Activated CD4-positive, alpha-beta T cell treated with anti-CD3 and anti-CD28 coated beads, Interleukin-2, amount 10 ng/mL, durations not matched to agents 7 days and 5 days (primary cell): ENCODE measurements at regions of chr17 and their contacts with region 1.

Region 1: DNA sequence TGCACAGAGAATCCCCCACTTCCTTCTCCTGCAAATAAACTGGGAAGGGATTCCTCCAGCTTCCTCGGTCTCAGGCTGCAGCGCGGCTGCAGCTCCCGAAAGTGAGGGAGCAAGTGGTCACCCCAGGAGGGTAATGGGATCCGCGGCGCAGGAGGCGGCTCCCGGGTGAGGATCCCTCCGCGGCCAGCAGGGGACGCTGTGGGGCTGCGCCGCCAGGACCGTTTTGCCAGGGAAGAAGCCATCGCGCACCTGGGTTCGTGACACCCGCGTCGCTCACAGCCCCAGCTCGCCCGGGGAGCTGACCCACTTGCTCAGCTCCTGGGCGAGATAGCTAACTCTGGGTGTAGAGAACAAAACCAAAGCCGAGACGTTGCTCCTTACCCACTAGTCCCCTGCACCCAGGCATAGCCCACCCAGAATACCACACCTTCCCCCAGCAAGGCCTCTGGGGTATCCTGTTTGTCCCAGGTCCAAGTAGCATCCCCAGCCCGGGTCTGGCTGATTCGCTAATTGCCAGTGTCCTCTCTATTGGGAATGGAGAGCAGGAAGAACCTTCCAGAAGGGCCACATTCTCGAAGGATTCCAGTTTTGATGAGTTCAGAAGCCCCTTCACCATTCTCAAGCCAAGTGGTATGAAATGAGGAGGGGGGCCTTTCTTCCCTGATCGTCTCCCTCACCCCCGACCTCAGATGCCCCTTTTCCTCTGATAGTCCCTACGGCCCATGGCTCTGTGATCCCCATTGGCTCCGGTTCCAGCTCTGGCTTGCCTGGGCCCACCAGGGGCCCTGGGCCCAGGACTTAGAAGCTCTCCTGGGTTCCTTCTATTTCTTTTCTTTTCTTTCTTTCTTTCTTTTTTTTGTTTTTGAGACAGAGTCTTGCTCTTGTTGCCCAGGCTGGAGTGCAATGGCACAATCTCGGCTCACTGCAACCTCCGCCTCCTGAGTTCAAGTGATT is 14.1 kb downstream of the CYGB start:
- DNase-seq: peak; percentile 80
- H3K4me3 Mint-ChIP-seq: no peak overlapping the region
- H3K27ac Mint-ChIP-seq: peak overlapping the region; percentile 82
- H3K4me1 Mint-ChIP-seq: peaks cover 31% of the 10 kb centered on the region
- H3K27me3 Mint-ChIP-seq: no peaks in the 10 kb centered on the region

Region 2: GRCh38 chr17:76337413-76337777 is 186.0 kb before region 1 on chr17:
- CTCF ChIA-PET with region 1: no interaction called
- POLR2A ChIA-PET with region 1: no interaction called
- DNase-seq: no peak
- H3K4me3 Mint-ChIP-seq: no peak overlapping the region
- H3K27ac Mint-ChIP-seq: no peak overlapping the region
- H3K4me1 Mint-ChIP-seq: peaks cover 3% of the 10 kb centered on the region
- H3K27me3 Mint-ChIP-seq: no peaks in the 10 kb centered on the region

Region 3: GRCh38 chr17:76534831-76535732 is 11.7 kb after region 1 on chr17:
- CTCF ChIA-PET with region 1: interaction called, 16 read pairs
- POLR2A ChIA-PET with region 1: no interaction called
- DNase-seq: no peak
- H3K4me3 Mint-ChIP-seq: no peak overlapping the region
- H3K27ac Mint-ChIP-seq: peak overlapping the region; percentile 46
- H3K4me1 Mint-ChIP-seq: peaks cover 5% of the 10 kb centered on the region
- H3K27me3 Mint-ChIP-seq: peaks cover 34% of the 10 kb centered on the region

Region 4: DNA sequence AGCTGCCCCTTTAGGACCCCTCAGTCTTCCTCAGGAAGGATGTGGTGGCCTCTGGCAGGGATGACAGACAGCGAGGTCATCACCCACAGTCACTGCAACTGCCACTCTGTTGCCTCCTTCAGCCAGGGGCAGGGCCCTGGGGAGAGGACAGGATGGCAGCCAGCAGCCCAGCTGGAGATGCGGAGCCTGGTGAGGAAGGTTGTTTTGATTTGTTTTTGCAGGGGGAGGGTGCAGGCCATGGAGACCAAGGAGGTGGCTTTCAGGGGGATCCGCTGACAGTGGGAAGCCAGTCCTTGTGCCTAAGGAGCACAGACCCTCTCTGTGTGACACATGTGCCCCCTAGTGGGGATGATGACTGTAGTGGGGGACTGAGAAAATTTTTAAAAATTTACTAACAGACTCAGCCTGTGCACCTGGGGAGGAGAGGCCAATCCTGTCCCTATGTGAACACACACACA is 23.9 kb after region 1 on chr17:
- CTCF ChIA-PET with region 1: interaction called, 19 read pairs
- POLR2A ChIA-PET with region 1: no interaction called
- DNase-seq: peak; percentile 79
- H3K4me3 Mint-ChIP-seq: no peak overlapping the region
- H3K27ac Mint-ChIP-seq: no peak overlapping the region
- H3K4me1 Mint-ChIP-seq: peaks cover 12% of the 10 kb centered on the region
- H3K27me3 Mint-ChIP-seq: peaks cover 14% of the 10 kb centered on the region

Region 5: DNA sequence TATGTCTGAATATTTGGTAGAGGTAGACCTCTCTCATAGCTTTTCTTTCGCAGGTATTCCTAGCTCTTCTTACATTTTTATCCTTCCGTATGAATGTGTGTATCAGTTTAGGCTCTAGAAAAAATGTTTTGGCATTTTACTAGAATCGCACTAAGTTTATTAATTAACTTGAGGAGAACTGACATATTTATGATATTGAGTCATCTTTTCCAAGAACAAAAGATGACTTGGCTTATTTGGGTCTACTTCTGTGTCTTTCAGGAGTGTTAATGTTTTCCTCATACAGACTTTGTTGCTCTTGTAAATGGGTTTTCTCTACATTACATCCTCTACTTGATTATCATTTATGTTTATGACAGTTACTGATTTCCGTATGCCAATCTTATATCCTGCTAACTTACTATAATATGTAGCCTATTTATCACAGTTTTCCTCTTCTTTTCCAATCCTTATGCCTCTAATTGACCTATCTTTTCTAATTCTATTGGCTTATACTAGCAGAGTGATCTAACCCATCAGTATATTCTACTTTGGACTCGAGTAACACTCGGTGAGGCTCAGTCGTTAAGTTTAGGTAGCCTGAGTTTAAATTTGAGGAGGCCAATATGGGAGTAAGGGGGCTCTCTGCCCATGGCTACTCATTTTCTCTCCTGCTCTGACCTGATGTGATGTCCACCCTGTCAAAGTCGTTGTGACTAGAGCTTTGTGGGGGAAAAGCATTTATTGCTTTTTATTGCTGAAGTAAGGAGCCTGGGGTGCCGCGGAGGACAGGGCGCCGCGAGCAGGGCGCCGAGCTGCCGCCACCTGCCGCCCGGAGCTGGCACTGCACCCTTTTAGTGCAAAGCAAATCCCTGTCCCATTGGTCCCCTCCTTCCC is 100.1 kb after region 1 on chr17:
- CTCF ChIA-PET with region 1: interaction called, 25 read pairs
- POLR2A ChIA-PET with region 1: no interaction called
- DNase-seq: peak; percentile 77
- H3K4me3 Mint-ChIP-seq: no peak overlapping the region
- H3K27ac Mint-ChIP-seq: no peak overlapping the region
- H3K4me1 Mint-ChIP-seq: peaks cover 2% of the 10 kb centered on the region
- H3K27me3 Mint-ChIP-seq: peaks cover 16% of the 10 kb centered on the region

Region 6: DNA sequence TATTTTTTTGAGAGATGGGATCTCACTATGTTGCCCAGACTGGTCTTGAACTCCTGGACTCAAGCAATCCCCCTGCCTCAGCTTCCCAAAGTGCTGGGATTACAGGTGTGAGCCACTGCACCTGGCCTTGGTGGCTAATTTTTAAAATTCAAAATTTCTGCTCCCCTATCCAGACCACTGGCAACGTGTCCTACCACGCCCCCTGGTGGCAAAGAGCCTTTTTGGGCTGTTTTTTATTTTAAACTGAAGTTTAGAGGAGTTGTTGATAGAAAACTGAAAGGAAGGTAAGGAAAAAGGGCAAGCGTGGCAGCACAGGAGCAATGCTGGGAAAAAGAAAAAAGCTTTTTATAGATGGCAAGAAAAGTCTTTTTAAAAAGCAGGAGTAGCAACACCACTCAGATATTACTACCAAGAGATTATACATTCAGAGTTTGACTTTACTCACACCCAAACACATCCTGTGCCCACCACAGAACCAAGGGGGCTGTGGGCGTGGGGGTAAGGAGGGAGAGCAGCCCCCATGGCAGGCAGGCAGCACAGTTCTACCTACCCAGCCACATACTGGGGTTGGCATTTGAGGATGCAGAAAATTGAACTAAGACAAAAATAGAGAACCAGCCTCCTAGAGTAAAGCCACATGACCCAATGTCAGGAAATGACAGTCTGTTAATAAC is 191.6 kb after region 1 on chr17:
- CTCF ChIA-PET with region 1: interaction called, 13 read pairs
- POLR2A ChIA-PET with region 1: no interaction called
- DNase-seq: peak; percentile 87
- H3K4me3 Mint-ChIP-seq: peak overlapping the region; percentile 18
- H3K27ac Mint-ChIP-seq: peak overlapping the region; percentile 77
- H3K4me1 Mint-ChIP-seq: peaks cover 57% of the 10 kb centered on the region
- H3K27me3 Mint-ChIP-seq: no peaks in the 10 kb centered on the region